Posterior cingulate gyrus (tissue), 11 donors: ENCODE measurements at regions of chr10 and their contacts with region 1.

Region 1: DNA sequence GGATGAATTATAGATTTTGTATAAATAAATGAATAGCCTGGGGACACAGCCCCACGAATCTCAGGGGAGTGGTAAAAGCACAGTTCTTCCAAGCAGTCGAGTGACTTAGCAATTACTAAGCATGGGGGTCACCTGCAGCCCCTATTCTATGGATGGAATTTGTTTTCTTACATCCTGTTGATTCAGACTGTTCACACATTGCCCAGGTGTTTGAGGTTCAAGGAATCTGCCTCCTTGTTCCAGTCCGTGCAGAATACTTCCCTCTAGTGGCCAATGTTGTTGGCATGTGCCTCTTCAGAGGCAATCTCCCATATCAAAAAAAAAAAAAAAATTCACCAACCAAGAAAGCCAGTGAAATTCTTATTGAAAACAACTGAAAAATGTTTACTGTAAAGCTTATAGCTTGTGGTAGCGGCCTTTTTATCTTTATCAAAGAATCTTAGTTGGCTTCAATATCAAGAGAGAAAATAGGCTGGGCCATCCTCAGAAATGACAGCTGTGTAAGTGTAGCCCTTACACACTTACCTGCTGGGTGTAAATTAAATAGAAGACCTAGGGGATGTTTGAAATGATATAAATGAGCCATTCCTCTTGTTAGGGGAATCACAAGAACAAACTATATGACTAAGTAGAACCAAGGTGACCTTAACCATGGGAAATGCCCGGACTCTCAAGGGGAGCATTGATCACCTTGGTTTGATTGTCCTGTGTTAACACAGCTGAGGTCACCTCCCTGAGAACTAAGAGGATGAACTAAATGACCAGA is 7.8 kb downstream of the LIPM start:
- DNase-seq: no peak

Region 2: GRCh38 chr10:88565072-88565471 is 245.3 kb before region 1 on chr10:
- intact Hi-C with region 1: loop called (anchors 10 kb)
- DNase-seq: no peak